ENCODE measurements at regions of chr11 and their contacts with region 1.

Region 1: GRCh38 chr11:6377902-6378639 is 12.2 kb upstream of the SMPD1 start:
- DNase-seq: no peak
- H3K4me3 ChIP-seq: no peak overlapping the region
- H3K27ac ChIP-seq: no peak overlapping the region
- H3K4me1 ChIP-seq: no peaks in the 10 kb centered on the region
- H3K27me3 ChIP-seq: no peaks in the 10 kb centered on the region
- CTCF ChIP-seq: no peak

Region 2: DNA sequence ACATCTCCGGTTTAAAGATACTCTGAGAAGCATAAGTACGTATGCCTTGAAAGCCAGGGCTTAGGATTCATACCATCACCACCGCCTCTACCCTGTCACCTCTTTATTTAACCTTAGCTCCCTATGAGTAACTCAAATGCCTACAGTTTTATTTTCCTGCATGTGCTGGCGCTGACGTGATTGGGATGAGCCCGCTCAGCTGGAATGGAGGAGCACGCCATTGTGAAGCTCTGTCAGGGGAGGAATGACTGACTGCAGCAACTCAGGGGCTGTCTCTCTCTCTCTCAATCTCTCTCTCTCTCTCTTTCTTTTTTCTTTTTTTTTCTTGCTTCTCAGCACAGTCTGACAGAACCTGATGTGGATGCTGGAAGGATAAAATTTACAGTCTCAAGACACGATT is 70.2 kb before region 1 on chr11:
- CTCF ChIA-PET with region 1: no interaction called
- dilution Hi-C with region 1: loop called (anchors 10 kb)
- in situ Hi-C with region 1: no loop called
- intact Hi-C with region 1: no loop called
- DNase-seq: no peak
- H3K4me3 ChIP-seq: no peak overlapping the region
- H3K27ac ChIP-seq: no peak overlapping the region
- H3K4me1 ChIP-seq: no peaks in the 10 kb centered on the region
- H3K27me3 ChIP-seq: no peaks in the 10 kb centered on the region
- CTCF ChIP-seq: no peak

Region 3: GRCh38 chr11:6443269-6444003 is 65.4 kb after region 1 on chr11:
- CTCF ChIA-PET with region 1: interaction called, 26 read pairs
- dilution Hi-C with region 1: loop called (anchors 5 kb)
- in situ Hi-C with region 1: loop called (anchors 5 to 10 kb)
- intact Hi-C with region 1: loop called (anchors 1 kb)
- DNase-seq: peak; percentile 27
- H3K4me3 ChIP-seq: no peak overlapping the region
- H3K27ac ChIP-seq: no peak overlapping the region
- H3K4me1 ChIP-seq: no peaks in the 10 kb centered on the region
- H3K27me3 ChIP-seq: no peaks in the 10 kb centered on the region
- CTCF ChIP-seq: peak; percentile 82 to 90

Region 4: DNA sequence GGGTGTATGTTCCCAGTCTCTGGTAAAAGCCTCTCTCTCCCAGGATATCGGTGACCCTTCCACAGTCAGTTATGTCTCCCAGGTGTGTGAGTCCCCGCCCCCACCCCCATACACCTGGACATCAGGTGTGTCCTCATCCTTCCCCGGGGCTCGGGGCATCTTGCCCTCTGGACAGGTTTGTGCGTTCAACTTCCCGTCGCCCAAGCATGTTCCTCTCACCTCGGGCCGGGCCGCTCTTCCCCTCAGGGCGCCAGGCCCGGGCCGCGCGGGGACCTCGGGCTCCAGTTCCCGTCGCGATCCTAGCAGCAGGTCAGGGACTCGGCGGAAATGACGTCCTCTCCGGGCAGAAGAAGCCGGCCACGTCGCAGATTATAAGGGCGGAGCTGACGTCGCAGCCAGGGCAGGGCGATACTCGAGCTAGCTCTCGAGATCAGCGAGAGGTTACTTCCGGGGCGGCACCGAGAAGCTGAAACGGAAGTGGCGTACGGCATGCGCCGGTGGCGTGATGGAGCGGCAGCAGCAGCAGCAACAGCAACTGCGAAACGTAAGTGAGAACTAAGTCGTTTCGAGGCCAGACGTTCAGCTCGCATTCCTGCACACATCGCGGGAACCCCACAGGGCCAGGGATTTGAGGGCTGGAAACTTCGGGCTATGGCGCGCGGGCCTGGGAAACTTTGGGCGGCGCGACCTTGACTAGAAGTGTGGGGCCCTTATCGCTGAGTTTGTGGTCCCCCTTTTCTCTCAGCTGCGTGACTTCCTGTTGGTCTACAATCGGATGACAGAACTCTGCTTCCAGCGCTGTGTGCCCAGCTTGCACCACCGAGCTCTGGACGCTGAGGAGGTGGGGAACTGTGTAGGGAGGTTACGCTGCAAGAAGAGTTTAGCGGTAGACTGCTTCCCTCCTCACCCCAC is 103.2 kb after region 1 on chr11 and contains the starts of genes ARFIP2 and TIMM10B:
- CTCF ChIA-PET with region 1: interaction called, 12 read pairs
- dilution Hi-C with region 1: no loop called
- in situ Hi-C with region 1: no loop called
- intact Hi-C with region 1: no loop called
- DNase-seq: peak; percentile 97
- H3K4me3 ChIP-seq: peak within 1 kb of the TSS; percentile 66 to 74 (median 67)
- H3K27ac ChIP-seq: peak within 1 kb of the TSS; percentile 91
- H3K4me1 ChIP-seq: peaks cover 21% of the 10 kb centered on the region
- H3K27me3 ChIP-seq: no peaks in the 10 kb centered on the region
- CTCF ChIP-seq: no peak
- total RNA-seq, gene ARFIP2: 70.5 to 76.2 TPM
- total RNA-seq, gene TIMM10B: 36.0 to 42.7 TPM

Region 5: DNA sequence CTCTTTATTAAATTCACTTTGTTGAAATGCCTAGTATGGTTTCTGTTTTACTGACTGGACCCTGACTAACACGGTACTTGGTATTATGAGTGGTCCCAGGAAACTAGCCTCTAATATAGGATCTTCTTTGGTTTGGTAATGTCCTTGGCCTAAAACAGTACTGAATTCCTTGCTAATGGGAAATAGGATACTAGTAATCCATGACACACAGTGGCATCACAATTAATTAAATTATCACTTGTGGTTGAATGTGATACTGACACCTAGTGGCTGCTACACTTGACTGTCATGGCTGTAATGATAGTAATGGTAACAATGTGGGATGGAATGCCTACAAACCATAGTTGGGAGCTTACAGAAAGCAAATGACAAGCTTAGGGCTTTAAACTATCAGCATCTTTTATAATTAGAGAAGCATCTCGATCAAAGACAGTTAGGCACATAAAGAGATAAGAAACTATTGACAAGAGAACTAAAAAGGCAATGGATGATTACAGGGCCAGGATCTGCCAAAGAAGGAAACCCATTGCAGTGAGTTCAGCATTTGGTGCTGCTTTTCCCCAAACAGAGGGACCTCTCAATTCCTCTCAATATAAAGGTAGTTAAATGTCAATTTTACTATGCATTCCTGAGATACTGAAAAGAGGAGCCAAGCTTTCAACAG is 127.6 kb after region 1 on chr11:
- CTCF ChIA-PET with region 1: interaction called, 3 read pairs
- dilution Hi-C with region 1: no loop called
- in situ Hi-C with region 1: loop called (anchors 10 kb)
- intact Hi-C with region 1: loop called (anchors 1 kb)
- DNase-seq: peak; percentile 65
- H3K4me3 ChIP-seq: no peak overlapping the region
- H3K27ac ChIP-seq: no peak overlapping the region
- H3K4me1 ChIP-seq: peaks cover 9% of the 10 kb centered on the region
- H3K27me3 ChIP-seq: no peaks in the 10 kb centered on the region
- CTCF ChIP-seq: peak; percentile 74 to 79

Region 6: DNA sequence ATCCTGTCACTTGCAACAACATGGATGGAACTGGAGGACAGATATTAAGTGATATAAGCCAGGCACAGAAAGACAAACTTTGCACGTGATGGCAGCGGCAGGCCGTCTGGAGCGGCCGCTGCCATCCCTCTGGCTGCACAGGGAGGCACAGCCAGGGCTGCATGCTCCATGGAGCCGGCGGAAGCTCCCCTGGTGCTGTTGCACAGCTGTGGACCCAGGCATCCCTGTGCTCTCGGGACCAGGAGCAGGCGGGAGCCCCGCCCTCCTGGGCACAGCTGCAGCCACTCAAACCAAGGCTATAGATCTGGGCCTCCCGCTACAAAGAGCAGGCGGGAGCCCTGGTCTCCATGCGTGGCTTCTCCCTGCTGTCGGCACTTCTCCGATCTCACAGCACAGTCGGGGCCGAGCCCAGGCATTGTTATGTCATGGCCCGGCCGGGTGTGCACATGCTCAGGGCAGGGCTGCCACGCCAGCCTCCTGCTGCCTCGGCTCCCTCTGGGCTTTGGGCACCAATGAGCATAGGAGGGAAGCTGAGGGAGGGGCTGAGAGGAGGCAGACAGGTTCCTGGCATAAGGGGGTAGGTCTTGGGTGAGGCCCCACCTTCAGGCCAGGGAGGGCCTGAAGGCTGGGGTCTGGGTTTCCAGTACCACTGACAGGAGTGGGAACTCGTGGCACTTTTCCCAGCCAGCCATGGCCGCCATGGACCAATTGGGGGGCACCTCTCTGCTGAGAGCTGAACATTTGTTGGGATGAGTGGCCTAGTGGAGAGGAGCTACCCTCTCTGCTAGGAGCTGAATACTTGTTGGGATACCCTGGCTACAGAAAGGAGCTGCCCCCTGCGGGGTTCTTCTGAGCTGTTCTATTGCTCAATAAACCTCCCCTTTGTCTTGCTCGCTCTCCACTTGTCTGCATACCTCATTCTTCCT is 208.6 kb after region 1 on chr11:
- CTCF ChIA-PET with region 1: no interaction called
- dilution Hi-C with region 1: no loop called
- in situ Hi-C with region 1: no loop called
- intact Hi-C with region 1: no loop called
- DNase-seq: no peak
- H3K4me3 ChIP-seq: no peak overlapping the region
- H3K27ac ChIP-seq: no peak overlapping the region
- H3K4me1 ChIP-seq: no peaks in the 10 kb centered on the region
- H3K27me3 ChIP-seq: no peaks in the 10 kb centered on the region
- CTCF ChIP-seq: no peak

Region 7: DNA sequence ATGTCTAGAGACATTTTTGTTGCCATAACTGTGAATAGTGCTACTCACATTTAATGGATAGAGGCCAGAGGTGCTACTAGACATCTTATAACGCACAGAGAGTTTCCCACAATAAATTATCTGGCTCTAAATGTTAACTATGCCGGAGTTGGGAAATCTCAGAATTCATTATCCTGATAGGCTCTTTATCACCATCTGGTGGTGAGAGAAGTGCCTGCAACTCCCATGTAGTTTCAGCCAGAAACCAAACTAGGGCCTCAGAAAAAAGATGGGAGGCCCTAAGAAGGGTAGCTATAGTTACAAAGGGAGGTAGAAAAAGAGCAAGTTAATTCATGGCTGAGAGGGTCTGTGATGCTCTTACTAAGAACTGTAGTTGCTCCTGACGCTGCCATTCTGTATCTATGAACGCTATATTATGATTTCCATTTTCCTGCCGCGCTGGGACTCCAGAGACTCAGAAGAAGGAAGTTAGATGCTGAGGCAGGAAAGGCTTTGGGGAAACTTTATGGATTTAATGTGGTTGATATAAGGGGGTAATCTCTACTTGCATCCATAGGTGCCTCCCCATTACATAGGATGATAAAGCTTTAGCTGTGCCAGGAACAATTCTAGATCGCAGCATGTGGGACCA is 327.9 kb after region 1 on chr11:
- CTCF ChIA-PET with region 1: interaction called, 3 read pairs
- dilution Hi-C with region 1: no loop called
- in situ Hi-C with region 1: no loop called
- intact Hi-C with region 1: loop called (anchors 1 kb)
- DNase-seq: peak; percentile 21
- H3K4me3 ChIP-seq: no peak overlapping the region
- H3K27ac ChIP-seq: no peak overlapping the region
- H3K4me1 ChIP-seq: no peaks in the 10 kb centered on the region
- H3K27me3 ChIP-seq: no peaks in the 10 kb centered on the region
- CTCF ChIP-seq: peak; percentile 80 to 91

Region 8: DNA sequence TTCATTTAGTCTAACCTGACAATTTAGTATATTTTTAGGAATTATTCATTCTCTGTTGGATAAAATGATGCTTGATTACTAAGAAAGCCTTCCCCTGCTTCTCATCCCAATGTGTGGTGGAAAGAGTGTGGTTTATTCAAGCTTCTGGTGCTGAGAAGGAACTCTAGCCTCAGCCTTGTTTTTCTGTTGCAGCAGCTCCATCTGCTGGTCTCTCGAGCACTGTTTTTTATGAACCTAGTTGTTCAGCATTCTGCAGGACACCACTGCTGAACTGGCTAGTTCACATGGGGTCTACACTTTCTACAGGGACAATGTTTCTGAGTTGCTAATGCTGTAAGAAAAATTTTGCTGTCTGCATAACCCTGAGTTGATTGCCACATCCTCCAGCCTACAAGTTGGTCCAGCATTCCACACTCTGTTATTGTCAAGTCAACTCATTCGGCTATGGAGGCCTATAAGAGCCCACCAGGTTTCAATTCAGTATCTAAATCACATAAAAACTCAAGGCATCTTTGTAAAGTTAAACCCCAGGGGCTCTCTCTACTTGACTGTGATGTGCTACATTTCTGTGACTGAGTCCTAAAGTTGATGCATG is 379.4 kb after region 1 on chr11:
- CTCF ChIA-PET with region 1: no interaction called
- dilution Hi-C with region 1: no loop called
- in situ Hi-C with region 1: no loop called
- intact Hi-C with region 1: loop called (anchors 5 kb)
- DNase-seq: peak; percentile 31
- H3K4me3 ChIP-seq: no peak overlapping the region
- H3K27ac ChIP-seq: no peak overlapping the region
- H3K4me1 ChIP-seq: no peaks in the 10 kb centered on the region
- H3K27me3 ChIP-seq: no peaks in the 10 kb centered on the region
- CTCF ChIP-seq: peak; percentile 45 to 70